Right ventricle myocardium inferior (tissue), 1 donor: ENCODE measurements at regions of chr20 and their contacts with region 1.

Region 1: GRCh38 chr20:53578492-53579222 is 15.0 kb downstream of the ZNF217 start:
- DNase-seq: no peak
- ATAC-seq: peak; percentile 73

Region 2: DNA sequence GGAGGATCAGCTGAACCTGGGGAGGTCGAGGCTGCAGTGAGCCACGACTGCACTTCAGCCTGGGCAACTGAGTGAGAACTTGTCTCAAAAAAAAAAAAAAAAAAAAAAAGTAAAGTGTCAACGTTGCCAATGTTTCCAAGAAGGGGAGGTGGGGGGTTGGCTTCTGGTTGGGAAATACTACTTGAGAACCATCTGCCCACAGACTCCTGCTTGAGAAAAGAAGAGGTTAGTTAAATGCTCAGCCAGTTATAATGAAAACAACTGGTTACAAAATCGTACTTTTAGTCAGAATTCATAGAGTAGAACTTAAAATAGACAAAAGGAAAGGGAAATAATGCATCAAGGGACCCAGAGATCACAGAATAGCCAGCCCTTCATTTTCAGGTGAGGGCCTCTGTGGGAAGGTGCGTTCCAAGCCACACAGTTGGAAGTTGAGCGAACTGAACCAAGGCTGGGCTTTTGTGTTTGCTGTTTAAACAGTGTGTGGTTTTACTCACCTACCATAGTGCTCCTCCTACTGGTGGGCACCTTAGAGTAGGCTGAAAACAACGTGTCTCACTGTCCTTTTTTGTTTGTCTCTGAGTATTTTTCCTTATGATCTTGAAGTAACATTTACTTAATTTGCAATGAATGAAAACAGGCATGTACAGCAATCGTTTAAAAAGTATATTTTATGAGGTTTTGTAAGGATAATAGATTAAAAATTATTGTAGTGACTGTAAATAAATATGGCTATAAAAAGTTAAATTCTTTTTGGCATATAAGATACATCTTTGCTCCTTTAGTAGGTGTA is 291.0 kb after region 1 on chr20:
- intact Hi-C with region 1: loop called (anchors 2 kb)
- DNase-seq: no peak
- ATAC-seq: peak; percentile 90

Region 3: DNA sequence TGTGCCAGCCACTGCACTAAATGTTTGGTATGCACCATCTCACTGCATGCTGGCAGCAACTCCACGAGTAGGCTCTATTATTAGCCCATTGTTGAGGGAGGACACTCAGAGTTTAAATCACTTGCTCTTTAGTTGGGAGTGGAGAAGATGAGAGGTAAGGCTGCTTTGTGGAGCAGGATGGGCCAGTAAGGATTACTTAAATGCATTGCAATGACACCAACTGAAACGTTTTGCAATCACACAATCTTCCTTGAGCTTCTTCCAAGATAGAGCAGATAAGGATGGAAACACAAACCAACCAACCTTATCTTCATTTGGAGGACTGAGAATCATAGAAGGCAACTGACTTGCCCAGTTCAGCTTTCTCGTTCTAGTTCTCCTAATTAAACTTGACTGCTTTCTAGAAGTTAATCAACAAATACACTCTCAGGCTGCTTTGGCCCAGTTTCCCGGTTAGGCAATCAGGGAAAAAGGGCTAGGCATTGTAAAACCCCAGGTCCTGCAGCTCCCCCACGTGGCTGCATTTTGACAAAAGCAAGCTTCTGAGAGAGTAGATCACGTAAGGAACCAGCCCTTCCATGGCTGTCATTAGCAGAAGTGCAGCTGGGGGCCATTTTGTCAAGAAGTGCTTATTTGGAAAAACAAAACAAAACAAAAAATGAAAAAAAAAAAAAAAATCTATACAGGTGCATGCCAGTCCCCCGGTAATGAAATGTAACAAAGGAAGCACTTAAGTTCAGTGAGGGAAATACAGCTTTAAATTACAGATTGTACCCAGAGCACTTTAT is 361.1 kb after region 1 on chr20:
- intact Hi-C with region 1: loop called (anchors 1 kb)
- DNase-seq: peak; percentile 93
- ATAC-seq: peak; percentile 90

Region 4: GRCh38 chr20:54062812-54063280 is 484.2 kb after region 1 on chr20:
- intact Hi-C with region 1: loop called (anchors 5 kb)
- DNase-seq: no peak
- ATAC-seq: peak; percentile 40